ENCODE measurements at regions of chr13 and their contacts with region 1.

Region 1: DNA sequence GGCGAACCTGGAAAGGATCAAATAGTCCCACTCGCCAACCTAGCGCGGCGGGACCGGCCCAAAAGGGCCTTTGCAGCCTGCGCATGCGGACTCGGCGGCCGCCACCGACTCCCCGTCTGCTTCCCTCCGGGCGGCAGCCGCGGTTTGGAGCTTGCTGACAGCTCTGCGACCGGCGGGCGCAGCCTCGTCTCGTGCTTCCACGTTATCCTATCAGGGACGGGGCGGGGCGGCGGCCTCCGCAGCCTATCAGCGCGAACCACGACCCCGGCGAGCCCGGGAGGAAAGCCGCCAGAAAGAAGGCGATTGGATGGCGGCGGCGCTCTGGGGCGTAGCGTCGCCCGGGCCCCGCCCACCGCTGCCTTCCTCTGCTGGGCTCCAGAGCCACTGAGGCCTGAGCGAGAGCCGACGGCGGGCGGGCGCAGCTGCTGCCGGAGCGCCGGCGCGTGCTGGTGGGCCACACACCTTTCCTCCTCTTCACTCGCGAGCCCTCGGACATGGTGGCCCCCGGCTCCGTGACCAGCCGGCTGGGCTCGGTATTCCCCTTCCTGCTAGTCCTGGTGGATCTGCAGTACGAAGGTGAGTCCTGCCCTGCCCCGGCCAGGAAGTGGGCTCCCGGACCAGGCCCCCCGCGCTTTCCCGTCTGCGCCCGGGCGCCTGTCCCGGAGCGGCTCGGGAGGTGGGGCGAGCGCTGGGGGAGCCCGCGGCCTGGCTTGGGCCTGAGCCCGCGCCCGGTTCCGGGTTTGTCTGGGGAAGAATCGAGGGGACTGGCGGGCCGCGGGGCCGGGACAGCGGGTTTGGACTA is at the start of gene DNAJC3:
- DNase-seq: peak; percentile 96 to 99 (median 98)
- ATAC-seq: peak; percentile 97
- H3K4me3 ChIP-seq: peak within 1 kb of the TSS; percentile 88
- H3K4me3 Mint-ChIP-seq: peak within 1 kb of the TSS; percentile 84 to 99 (median 95)
- H3K27ac ChIP-seq: peak within 1 kb of the TSS; percentile 83
- H3K27ac Mint-ChIP-seq: peak within 1 kb of the TSS; percentile 91 to 98 (median 94)
- H3K4me1 ChIP-seq: peaks cover 25% of the 10 kb centered on the region in 2 donors
- H3K4me1 Mint-ChIP-seq: peaks cover 42 to 77% (median 72%) of the 10 kb centered on the region in 7 donors
- H3K27me3 ChIP-seq: no peaks in the 10 kb centered on the region
- H3K27me3 Mint-ChIP-seq: no peaks in the 10 kb centered on the region
- total RNA-seq, gene DNAJC3: 13.9 to 33.0 (median 22.7) TPM

Region 2: DNA sequence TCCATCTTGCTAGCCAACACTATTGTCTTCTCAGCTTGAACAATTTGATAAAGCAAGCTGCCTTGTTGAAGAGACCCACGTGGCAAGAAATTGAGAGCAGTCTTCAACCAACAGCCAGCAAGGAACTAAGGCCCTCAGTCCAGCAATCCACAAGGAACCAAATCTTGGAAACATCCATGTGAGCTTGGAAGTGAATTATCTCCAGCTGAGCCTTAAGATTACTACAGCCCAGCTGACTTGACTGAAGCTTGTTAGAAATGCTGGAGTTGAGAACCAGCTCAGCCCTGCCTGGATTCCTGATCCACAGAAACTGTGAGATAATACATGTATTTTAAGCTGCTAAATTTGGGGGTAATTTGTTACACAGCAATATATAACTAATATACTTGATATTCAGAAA is 1171.2 kb before region 1 on chr13:
- CTCF ChIA-PET with region 1: no interaction called
- POLR2A ChIA-PET with region 1: no interaction called
- intact Hi-C with region 1: loop called in 1 of 2 experiments (anchors 5 kb)
- DNase-seq: no peak
- ATAC-seq: no peak
- H3K4me3 ChIP-seq: no peak overlapping the region
- H3K4me3 Mint-ChIP-seq: no peak overlapping the region
- H3K27ac ChIP-seq: no peak overlapping the region
- H3K27ac Mint-ChIP-seq: no peak overlapping the region
- H3K4me1 ChIP-seq: peaks cover 3 to 18% of the 10 kb centered on the region in 2 donors
- H3K4me1 Mint-ChIP-seq: peaks cover 5 to 23% (median 21%) of the 10 kb centered on the region in 7 donors
- H3K27me3 ChIP-seq: no peaks in the 10 kb centered on the region
- H3K27me3 Mint-ChIP-seq: peaks cover 3 to 23% (median 6%) of the 10 kb centered on the region in 5 donors

Region 3: DNA sequence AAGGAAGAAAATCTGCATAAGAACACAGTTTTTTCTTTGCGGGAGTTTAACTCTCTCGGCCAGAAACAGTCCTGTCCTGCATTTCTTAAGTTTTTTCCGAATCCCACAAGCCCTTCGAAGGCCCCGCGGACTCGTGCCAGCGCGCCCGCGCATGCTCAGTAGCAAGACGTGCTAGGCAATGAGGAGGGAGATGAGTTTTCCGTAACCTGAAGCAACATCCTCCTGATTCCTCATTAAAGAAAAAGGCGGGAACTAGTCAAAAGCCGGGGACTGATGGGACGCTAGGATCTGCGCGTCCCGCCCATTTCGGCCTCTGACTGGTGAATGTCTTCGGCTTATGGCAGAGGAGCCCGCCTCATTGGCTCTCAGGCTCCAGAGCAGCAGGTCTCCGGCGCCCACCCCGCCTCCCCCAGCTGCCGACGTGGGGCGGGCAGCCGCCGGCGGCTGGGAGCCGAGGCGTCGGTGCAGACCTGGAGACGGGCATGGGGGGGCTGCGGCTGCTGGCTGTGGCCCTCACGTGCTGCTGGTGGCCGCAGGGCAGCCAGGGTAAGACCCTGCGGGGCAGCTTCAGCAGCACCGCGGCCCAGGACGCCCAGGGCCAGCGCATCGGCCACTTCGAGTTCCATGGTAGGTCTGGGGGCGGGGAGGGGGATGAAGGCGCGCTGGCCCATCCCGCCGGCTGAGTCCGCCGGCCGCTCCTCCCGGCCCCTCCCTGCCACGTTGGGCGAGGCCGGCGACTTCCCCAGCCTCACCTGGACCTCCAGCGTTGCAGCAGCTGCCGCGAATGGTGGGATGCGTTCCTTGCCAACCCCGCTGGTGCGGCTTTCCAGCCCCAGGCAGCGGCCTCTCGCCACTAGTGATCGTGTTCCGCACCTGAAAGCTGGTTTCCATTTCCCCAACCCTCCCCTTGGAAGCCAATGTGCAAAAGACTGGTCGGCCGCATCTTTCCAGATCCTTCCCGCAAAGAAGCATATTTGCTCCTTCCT is 1075.2 kb before region 1 on chr13 and contains the start of gene GPR180:
- CTCF ChIA-PET with region 1: no interaction called
- POLR2A ChIA-PET with region 1: no interaction called
- intact Hi-C with region 1: loop called in 1 of 2 experiments (anchors 1 kb)
- DNase-seq: peak; percentile 67 to 92 (median 88)
- ATAC-seq: peak; percentile 99
- H3K4me3 ChIP-seq: peak within 1 kb of the TSS; percentile 58
- H3K4me3 Mint-ChIP-seq: peak within 1 kb of the TSS; percentile 79 to 90 (median 86)
- H3K27ac ChIP-seq: peak within 1 kb of the TSS; percentile 75
- H3K27ac Mint-ChIP-seq: peak within 1 kb of the TSS; percentile 82 to 90 (median 87)
- H3K4me1 ChIP-seq: peaks cover 0 to 10% of the 10 kb centered on the region in 2 donors
- H3K4me1 Mint-ChIP-seq: peaks cover 16 to 45% (median 32%) of the 10 kb centered on the region in 7 donors
- H3K27me3 ChIP-seq: no peaks in the 10 kb centered on the region
- H3K27me3 Mint-ChIP-seq: no peaks in the 10 kb centered on the region
- total RNA-seq, gene GPR180: 1.8 to 7.0 (median 5.4) TPM

Region 4: DNA sequence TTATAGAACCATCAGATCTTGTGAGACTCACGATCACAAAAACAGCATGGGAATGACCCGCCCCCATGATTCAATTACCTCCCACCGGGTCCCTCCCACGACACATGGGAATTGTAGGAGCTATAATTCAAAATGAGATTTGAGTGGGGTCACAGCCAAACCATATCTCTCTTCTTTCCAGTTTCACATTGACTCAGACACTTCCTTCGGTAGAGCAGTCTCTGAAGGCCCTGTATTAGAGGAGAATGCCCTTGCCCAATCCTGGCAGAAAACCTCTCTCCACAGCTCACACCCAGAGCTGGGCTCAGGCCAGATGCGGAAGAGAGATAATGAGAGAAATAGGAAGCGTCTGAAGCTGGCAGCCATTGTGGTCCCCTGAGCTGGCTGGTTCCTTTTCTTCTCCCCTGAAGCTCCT is 196.8 kb before region 1 on chr13:
- CTCF ChIA-PET with region 1: no interaction called
- POLR2A ChIA-PET with region 1: no interaction called
- intact Hi-C with region 1: loop called (anchors 2 to 5 kb)
- DNase-seq: peak in 1 of 9 donors; percentile 37
- ATAC-seq: peak; percentile 60
- H3K4me3 ChIP-seq: no peak overlapping the region
- H3K4me3 Mint-ChIP-seq: peak overlapping the region in 3 of 10 donors; percentile 8 to 35 (median 11)
- H3K27ac ChIP-seq: no peak overlapping the region
- H3K27ac Mint-ChIP-seq: peak overlapping the region in 1 of 9 donors; percentile 31
- H3K4me1 ChIP-seq: no peaks in the 10 kb centered on the region
- H3K4me1 Mint-ChIP-seq: peaks cover 0 to 17% (median 0%) of the 10 kb centered on the region in 7 donors
- H3K27me3 ChIP-seq: no peaks in the 10 kb centered on the region
- H3K27me3 Mint-ChIP-seq: peaks cover 0 to 8% (median 0%) of the 10 kb centered on the region in 5 donors

Region 5: GRCh38 chr13:95763601-95764000 is 86.6 kb after region 1 on chr13:
- CTCF ChIA-PET with region 1: no interaction called
- POLR2A ChIA-PET with region 1: no interaction called
- intact Hi-C with region 1: loop called in 1 of 2 experiments (anchors 5 kb)
- DNase-seq: no peak
- ATAC-seq: no peak
- H3K4me3 ChIP-seq: no peak overlapping the region
- H3K4me3 Mint-ChIP-seq: no peak overlapping the region
- H3K27ac ChIP-seq: no peak overlapping the region
- H3K27ac Mint-ChIP-seq: no peak overlapping the region
- H3K4me1 ChIP-seq: no peaks in the 10 kb centered on the region
- H3K4me1 Mint-ChIP-seq: no peaks in the 10 kb centered on the region
- H3K27me3 ChIP-seq: no peaks in the 10 kb centered on the region
- H3K27me3 Mint-ChIP-seq: no peaks in the 10 kb centered on the region

Region 6: GRCh38 chr13:96238861-96239626 is 562.1 kb after region 1 on chr13:
- CTCF ChIA-PET with region 1: no interaction called
- POLR2A ChIA-PET with region 1: no interaction called
- intact Hi-C with region 1: no loop called
- DNase-seq: no peak
- ATAC-seq: no peak
- H3K4me3 ChIP-seq: no peak overlapping the region
- H3K4me3 Mint-ChIP-seq: no peak overlapping the region
- H3K27ac ChIP-seq: no peak overlapping the region
- H3K27ac Mint-ChIP-seq: no peak overlapping the region
- H3K4me1 ChIP-seq: no peaks in the 10 kb centered on the region
- H3K4me1 Mint-ChIP-seq: no peaks in the 10 kb centered on the region
- H3K27me3 ChIP-seq: no peaks in the 10 kb centered on the region
- H3K27me3 Mint-ChIP-seq: no peaks in the 10 kb centered on the region

Region 7: DNA sequence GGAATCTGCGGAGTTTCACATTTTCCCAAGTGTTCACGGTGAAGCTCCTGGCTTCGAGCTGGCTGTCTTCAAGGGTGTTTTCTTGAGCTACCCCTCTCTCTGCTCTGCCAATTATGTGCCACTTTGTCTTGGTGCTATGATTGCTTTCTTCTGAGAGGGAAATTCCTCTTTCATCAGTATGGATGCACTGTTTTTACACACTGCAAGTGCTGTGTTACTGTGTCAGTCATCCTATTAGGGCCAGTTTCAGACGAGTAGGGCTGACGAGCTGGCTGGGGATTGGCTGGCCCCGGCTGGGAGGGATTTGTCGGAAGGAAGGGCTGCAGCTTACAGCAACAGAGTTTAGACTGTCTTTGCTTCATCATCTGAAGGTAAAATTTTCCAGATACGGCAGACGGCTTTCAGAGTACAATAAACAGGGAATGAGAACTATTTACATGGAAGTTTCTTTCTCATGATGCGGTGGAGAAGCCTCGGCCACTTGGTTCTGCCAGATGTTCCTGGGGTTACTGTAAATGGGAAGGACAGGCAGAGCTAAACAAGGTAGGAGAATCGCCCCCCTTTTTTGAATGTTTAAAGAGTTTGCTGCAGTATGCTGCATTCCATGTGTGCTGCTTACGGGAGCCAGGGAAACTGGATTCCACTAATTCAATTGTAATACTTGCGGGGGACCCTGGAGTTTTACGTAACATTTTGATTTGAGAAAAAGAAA is 1545.2 kb after region 1 on chr13 and contains the start of gene MBNL2:
- CTCF ChIA-PET with region 1: no interaction called
- POLR2A ChIA-PET with region 1: no interaction called
- intact Hi-C with region 1: loop called in 1 of 2 experiments (anchors 5 kb)
- DNase-seq: peak; percentile 53 to 93 (median 84)
- ATAC-seq: peak; percentile 97
- H3K4me3 ChIP-seq: peak within 1 kb of the TSS; percentile 80
- H3K4me3 Mint-ChIP-seq: peak within 1 kb of the TSS; percentile 88 to 97 (median 95)
- H3K27ac ChIP-seq: peak within 1 kb of the TSS; percentile 81
- H3K27ac Mint-ChIP-seq: peak within 1 kb of the TSS; percentile 89 to 98 (median 94)
- H3K4me1 ChIP-seq: peaks cover 33 to 34% of the 10 kb centered on the region in 2 donors
- H3K4me1 Mint-ChIP-seq: peaks cover 27 to 56% (median 45%) of the 10 kb centered on the region in 7 donors
- H3K27me3 ChIP-seq: no peaks in the 10 kb centered on the region
- H3K27me3 Mint-ChIP-seq: no peaks in the 10 kb centered on the region
- total RNA-seq, gene MBNL2: 13.4 to 28.6 (median 24.6) TPM

Measured in naive thymus-derived CD4-positive, alpha-beta T cell (primary cell).